Ascending aorta (tissue), 2 donors: ENCODE measurements at regions of chr13 and their contacts with region 1.

Region 1: DNA sequence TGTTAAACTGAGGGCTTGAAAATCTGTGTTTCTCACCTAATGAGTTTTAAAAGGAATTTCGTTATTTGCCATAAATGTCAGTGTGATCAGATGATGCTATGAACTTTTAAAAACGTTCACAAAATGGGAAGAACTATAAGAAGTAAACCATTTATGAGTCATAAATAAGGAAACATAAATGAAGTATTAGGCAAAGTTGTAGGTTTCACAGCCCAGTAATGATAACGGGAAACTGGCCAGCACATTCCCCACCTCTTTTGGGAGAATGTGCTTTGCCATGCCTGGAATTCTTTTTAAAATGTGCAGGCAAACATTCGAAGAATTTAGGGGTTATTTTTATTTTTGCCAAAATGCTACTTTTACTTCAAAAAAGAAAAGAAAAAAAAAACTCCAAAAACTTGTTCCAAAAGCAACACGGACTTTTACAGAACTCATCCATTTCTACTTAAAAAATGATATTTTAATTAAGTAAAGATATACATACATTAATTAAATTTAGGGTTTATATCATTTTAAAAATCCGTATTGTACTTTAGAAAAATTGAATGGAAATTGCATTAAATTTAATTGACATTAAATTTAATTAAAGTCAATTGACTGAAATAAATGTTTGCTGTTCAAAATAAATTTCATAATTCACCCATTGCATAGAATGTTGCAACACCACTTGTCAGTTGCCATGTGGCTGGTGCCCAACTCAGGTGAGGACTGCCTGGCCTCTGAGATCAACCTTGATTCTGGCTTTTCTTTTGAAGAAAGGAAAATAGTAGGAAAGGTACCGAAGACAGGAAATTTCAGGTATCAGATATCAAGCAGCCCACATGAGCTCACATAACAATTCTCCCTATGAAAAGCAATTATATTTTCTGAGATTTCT is 1198.5 kb downstream of the EFNB2 start:
- DNase-seq: peak in 1 of 2 donors; percentile 66
- H3K4me3 ChIP-seq: no peak overlapping the region
- H3K27ac ChIP-seq: peak overlapping the region in 1 of 2 donors; percentile 2
- H3K4me1 ChIP-seq: peaks cover 3 to 16% of the 10 kb centered on the region in 2 donors
- H3K27me3 ChIP-seq: no peaks in the 10 kb centered on the region
- CTCF ChIP-seq: no peak

Region 2: DNA sequence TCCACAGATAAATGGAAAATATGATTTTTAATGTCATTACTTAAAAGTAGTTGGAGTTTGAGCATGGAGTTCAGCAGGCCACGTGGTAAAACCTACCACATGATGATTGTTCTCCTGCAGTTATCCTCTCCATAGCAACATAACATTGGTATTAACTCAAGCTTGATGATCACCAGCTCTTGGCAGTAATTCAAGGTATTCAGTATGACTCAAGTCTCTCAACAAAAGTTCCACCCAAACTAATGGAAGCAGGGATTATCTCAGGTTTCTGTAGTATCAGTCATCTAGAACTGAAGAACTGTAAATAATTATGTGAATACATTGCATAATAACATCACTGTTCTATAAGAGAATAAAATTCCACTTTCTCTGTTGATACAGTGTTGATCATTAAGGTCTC is 106.0 kb after region 1 on chr13:
- intact Hi-C with region 1: loop called (anchors 5 kb)
- DNase-seq: no peak
- H3K4me3 ChIP-seq: no peak overlapping the region
- H3K27ac ChIP-seq: peak overlapping the region in 1 of 2 donors; percentile 48
- H3K4me1 ChIP-seq: no peaks in the 10 kb centered on the region
- H3K27me3 ChIP-seq: no peaks in the 10 kb centered on the region
- CTCF ChIP-seq: no peak